ENCODE measurements at regions of chr13 and their contacts with region 1.

Region 1: GRCh38 chr13:44648392-44649103 is 72.4 kb upstream of the TSC22D1 start:
- DNase-seq: no peak
- ATAC-seq: no peak

Region 2: GRCh38 chr13:44591316-44591715 is 57.2 kb before region 1 on chr13:
- intact Hi-C with region 1: loop called in 1 of 2 experiments (anchors 10 kb)
- DNase-seq: no peak
- ATAC-seq: no peak